ENCODE measurements at regions of chr12 and their contacts with region 1.

Region 1: GRCh38 chr12:2884810-2885209 is 5.9 kb upstream of the TULP3 start:
- DNase-seq: no peak
- ATAC-seq: no peak
- H3K4me3 ChIP-seq: no peak overlapping the region
- H3K27ac ChIP-seq: no peak overlapping the region
- H3K4me1 ChIP-seq: peaks cover 0 to under 1% (median 0%) of the 10 kb centered on the region in 9 donors
- H3K27me3 ChIP-seq: no peaks in the 10 kb centered on the region
- CTCF ChIP-seq: no peak

Region 2: DNA sequence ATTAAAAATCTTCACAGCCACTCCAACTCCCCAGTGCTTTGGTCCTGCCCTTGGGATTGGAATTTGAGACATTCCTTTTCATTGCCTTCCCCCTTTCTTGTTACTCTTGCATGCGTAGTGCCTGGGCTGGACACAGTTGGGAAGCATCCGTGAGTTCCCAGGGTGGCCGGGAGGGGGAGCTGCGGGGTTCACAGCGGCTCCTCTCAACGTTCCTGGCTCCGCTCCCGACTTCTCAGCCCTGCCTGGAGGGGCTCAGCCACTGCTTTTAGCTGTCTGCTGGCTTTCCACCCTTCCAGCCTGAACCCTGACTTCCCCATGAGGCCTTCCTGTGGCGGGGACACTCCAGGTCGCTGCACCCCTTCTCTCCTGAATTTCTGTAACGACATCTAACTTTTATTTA is 31.2 kb before region 1 on chr12:
- intact Hi-C with region 1: no loop called
- DNase-seq: peak; percentile 85
- ATAC-seq: peak; percentile 77 to 94 (median 90)
- H3K4me3 ChIP-seq: no peak overlapping the region
- H3K27ac ChIP-seq: no peak overlapping the region
- H3K4me1 ChIP-seq: peaks cover 0 to 5% (median 0%) of the 10 kb centered on the region in 9 donors
- H3K27me3 ChIP-seq: no peaks in the 10 kb centered on the region
- CTCF ChIP-seq: peak; percentile 77 to 89 (median 87)

Region 3: GRCh38 chr12:3041558-3042164 is 156.9 kb after region 1 on chr12:
- intact Hi-C with region 1: loop called in 6 of 10 experiments (anchors 2 to 10 kb)
- DNase-seq: peak in 1 of 2 donors; percentile 47
- ATAC-seq: peak; percentile 9 to 74 (median 44)
- H3K4me3 ChIP-seq: no peak overlapping the region
- H3K27ac ChIP-seq: peak overlapping the region in 1 of 10 donors; percentile 46
- H3K4me1 ChIP-seq: peaks cover 4 to 29% (median 10%) of the 10 kb centered on the region in 9 donors
- H3K27me3 ChIP-seq: no peaks in the 10 kb centered on the region
- CTCF ChIP-seq: peak; percentile 31 to 76 (median 67)

Measured in heart right ventricle (tissue), 16 donors.